ENCODE measurements at regions of chr17 and their contacts with region 1.

Region 1: GRCh38 chr17:29617125-29617480 is 5.6 kb downstream of the CORO6 start:
- DNase-seq: peak; percentile 97
- H3K4me3 Mint-ChIP-seq: peak overlapping the region; percentile 77
- H3K27ac Mint-ChIP-seq: peak overlapping the region; percentile 87
- H3K4me1 Mint-ChIP-seq: peaks cover 52% of the 10 kb centered on the region
- H3K27me3 Mint-ChIP-seq: peaks cover 1% of the 10 kb centered on the region

Region 2: GRCh38 chr17:29568331-29569244 is 48.5 kb before region 1 on chr17 and contains the start of gene TP53I13:
- CTCF ChIA-PET with region 1: interaction called, 60 read pairs
- POLR2A ChIA-PET with region 1: interaction called, 30 read pairs
- intact Hi-C with region 1: loop called (anchors 1 kb)
- DNase-seq: peak; percentile 93
- H3K4me3 Mint-ChIP-seq: peak within 1 kb of the TSS; percentile 86
- H3K27ac Mint-ChIP-seq: peak within 1 kb of the TSS; percentile 94
- H3K4me1 Mint-ChIP-seq: peaks cover 38% of the 10 kb centered on the region
- H3K27me3 Mint-ChIP-seq: no peaks in the 10 kb centered on the region
- total RNA-seq, gene TP53I13: 54.2 to 55.3 TPM

Region 3: DNA sequence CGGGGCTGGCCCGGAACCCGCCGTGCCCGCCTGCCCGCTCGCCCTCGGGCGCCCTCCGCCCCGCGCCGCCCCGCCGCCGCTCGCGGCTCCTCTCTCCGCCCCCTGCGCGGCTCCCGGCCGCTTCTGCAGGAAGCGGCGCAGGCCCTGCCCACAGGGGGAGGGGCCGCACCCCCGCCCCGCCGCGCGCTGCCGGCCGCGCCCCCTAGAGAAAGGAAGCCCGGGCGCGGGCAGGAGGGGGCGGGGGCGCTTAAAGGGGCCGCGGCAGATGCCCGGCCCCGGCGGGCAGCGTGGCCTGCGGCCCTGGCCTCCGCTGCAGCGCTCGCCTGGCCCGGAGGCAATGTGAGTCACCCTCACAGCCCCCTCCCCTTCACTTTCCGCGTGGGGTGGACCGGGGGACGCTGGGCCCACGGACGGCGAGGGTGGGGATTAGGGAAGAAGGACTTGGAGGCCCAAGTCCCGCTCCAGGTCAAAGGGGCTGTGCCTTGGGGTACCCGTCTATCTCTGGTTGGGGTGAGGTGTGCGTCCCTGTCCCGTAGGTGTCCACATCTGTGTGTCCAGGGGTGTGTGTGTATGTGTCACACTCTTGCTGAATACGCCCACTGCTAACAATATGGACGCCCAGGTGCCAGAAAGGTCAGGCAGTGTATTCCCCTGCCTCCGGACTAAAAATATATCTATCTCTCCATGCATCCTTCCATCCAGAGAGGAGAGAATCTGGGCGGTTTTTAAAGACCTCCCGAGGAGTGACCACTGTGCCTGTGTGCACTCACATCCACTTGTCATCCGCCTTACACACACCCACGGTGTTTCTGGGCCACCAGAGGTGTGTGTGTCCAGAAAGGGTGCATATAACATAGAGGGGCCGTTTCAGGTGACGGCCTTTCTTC is 27.3 kb before region 1 on chr17 and contains the start of gene GIT1:
- CTCF ChIA-PET with region 1: interaction called, 159 read pairs
- POLR2A ChIA-PET with region 1: interaction called, 13 read pairs
- intact Hi-C with region 1: loop called (anchors 1 kb)
- DNase-seq: peak; percentile 88
- H3K4me3 Mint-ChIP-seq: peak within 1 kb of the TSS; percentile 94
- H3K27ac Mint-ChIP-seq: peak within 1 kb of the TSS; percentile 90
- H3K4me1 Mint-ChIP-seq: peaks cover 74% of the 10 kb centered on the region
- H3K27me3 Mint-ChIP-seq: no peaks in the 10 kb centered on the region
- total RNA-seq, gene GIT1: 51.3 to 54.4 TPM

Region 4: DNA sequence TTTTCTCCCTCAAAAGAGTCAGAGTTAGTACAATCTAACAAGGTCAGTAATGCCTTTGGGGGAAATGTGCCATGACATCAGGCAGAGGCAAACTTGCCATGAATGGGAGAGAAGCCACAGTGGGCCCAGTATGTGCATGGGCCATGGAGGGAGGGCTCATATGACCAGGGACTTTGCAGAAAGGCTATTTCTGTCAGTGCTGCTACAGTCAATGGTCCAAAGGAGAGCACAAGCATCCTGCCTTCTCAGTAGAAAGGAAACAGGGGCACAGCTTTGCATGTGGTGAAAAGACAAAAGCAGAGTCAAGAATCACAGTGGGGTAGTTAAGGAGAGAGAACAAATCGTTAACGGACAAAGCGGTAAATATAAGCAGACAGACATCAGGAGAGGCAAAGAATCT is 16.8 kb after region 1 on chr17:
- CTCF ChIA-PET with region 1: interaction called, 40 read pairs
- POLR2A ChIA-PET with region 1: interaction called, 6 read pairs
- intact Hi-C with region 1: no loop called
- DNase-seq: no peak
- H3K4me3 Mint-ChIP-seq: no peak overlapping the region
- H3K27ac Mint-ChIP-seq: no peak overlapping the region
- H3K4me1 Mint-ChIP-seq: peaks cover 17% of the 10 kb centered on the region
- H3K27me3 Mint-ChIP-seq: no peaks in the 10 kb centered on the region

Region 5: GRCh38 chr17:29664743-29665480 is 47.8 kb after region 1 on chr17:
- CTCF ChIA-PET with region 1: interaction called, 16 read pairs
- POLR2A ChIA-PET with region 1: interaction called, 3 read pairs
- intact Hi-C with region 1: no loop called
- DNase-seq: no peak
- H3K4me3 Mint-ChIP-seq: no peak overlapping the region
- H3K27ac Mint-ChIP-seq: peak overlapping the region; percentile 84
- H3K4me1 Mint-ChIP-seq: peaks cover 33% of the 10 kb centered on the region
- H3K27me3 Mint-ChIP-seq: no peaks in the 10 kb centered on the region

Region 6: DNA sequence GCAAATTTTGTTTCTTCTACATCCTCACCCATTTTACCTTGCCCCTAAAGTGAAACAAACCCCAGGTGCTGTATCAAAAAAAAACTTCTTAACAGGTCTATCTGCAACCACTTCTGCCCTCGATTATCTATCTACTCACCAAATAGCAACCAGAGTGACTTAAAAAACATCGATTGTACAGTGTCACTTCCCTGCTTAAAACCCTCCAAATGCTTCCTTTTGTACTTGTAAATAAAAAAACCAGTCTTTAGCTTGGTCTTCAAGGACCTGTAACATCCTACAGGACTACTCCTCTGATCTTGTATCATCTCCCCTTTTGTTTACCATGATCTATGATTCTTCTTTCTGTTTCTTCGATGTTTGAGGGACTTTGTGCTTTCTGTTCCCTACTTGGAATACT is 88.3 kb after region 1 on chr17:
- CTCF ChIA-PET with region 1: interaction called, 19 read pairs
- POLR2A ChIA-PET with region 1: interaction called, 5 read pairs
- intact Hi-C with region 1: loop called (anchors 2 kb)
- DNase-seq: no peak
- H3K4me3 Mint-ChIP-seq: peak overlapping the region; percentile 61
- H3K27ac Mint-ChIP-seq: peak overlapping the region; percentile 95
- H3K4me1 Mint-ChIP-seq: peaks cover 41% of the 10 kb centered on the region
- H3K27me3 Mint-ChIP-seq: no peaks in the 10 kb centered on the region

Region 7: DNA sequence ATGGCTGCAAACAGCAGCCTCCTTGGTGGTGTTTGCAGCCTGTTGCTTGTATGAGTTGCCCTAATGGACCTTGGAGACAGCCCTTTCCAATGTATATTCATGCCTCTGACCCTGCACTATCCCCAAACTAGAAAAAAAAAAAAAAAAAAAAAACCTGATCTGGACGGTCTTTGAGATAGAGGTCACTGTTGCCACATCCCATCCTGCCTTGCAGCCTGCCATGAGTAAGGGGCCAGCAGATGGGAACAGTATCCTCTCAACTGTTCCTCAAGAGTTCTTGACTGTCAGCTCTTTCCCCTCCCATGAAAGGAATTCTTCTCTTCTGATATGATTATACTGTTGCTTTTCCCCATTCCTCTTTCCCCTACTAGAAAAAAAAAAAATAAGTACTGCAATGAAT is 160.6 kb after region 1 on chr17:
- CTCF ChIA-PET with region 1: interaction called, 73 read pairs
- POLR2A ChIA-PET with region 1: interaction called, 10 read pairs
- intact Hi-C with region 1: loop called (anchors 2 kb)
- DNase-seq: no peak
- H3K4me3 Mint-ChIP-seq: no peak overlapping the region
- H3K27ac Mint-ChIP-seq: no peak overlapping the region
- H3K4me1 Mint-ChIP-seq: peaks cover 7% of the 10 kb centered on the region
- H3K27me3 Mint-ChIP-seq: no peaks in the 10 kb centered on the region

Region 8: GRCh38 chr17:30062372-30062771 is 445.3 kb after region 1 on chr17:
- CTCF ChIA-PET with region 1: no interaction called
- POLR2A ChIA-PET with region 1: no interaction called
- intact Hi-C with region 1: no loop called
- DNase-seq: no peak
- H3K4me3 Mint-ChIP-seq: no peak overlapping the region
- H3K27ac Mint-ChIP-seq: no peak overlapping the region
- H3K4me1 Mint-ChIP-seq: no peaks in the 10 kb centered on the region
- H3K27me3 Mint-ChIP-seq: peaks cover 6% of the 10 kb centered on the region

Measured in activated CD4-positive, alpha-beta memory T cell treated with anti-CD3 and anti-CD28 coated beads for 36 hours (primary cell).